Activated B cell treated with CpG ODN at 0.5 μM for 24 hours (primary cell): ENCODE measurements at regions of chr17 and their contacts with region 1.

Region 1: DNA sequence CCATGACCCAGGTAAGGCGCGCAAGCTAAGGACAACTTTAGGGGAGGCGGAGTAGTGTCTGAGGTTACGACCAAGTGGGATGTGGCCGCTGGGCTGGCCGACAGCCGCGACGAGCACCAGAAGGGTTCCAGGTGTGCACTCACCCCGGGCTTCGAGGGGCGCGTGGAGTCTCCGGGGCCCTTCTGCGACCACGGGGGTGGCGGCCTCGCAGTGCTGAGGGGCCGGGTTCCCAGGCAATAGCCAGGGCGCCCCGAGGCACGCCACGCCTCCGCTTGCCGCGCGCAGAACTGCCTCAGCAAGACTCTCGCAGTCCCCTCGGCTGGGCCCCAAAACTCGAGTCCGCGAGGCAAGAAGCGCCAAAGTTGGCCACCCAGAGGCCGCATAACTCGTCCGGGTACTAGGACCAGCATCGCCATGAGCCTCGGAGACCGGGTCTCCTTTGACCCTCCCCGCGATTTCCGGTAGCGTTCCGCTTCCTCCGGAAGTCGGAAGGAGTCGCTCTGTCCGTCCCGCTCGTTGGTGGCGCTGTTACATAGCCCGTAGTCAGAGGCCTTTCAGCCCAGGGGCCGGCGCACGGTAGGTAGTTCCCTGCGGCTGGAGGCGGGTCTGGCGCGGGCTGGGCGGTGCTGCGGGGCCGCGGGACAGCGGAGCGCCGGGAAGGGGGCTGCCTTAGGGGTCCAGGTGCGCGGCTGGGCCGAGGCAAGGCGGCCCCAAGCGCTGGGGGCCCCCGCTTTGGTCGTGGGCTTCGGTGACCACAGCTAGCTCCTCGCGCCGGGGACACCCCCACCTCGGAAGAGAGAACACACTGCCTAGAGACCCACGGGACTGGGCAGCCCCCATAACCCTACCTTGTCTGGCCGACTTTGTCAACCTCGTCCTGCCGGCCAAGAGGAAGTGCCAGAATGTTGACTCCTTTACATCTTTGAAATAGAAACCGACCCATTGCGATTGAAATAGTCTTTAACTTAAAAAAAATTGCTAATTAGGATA is at the starts of genes ADPRM and SCO1:
- DNase-seq: peak; percentile 85
- ATAC-seq: peak; percentile 97
- H3K4me3 Mint-ChIP-seq: peak within 1 kb of the TSS; percentile 92
- H3K27ac Mint-ChIP-seq: peak within 1 kb of the TSS; percentile 92
- H3K4me1 Mint-ChIP-seq: peaks cover 51% of the 10 kb centered on the region
- H3K27me3 Mint-ChIP-seq: no peaks in the 10 kb centered on the region
- CTCF ChIP-seq: no peak
- total RNA-seq, gene ADPRM: 14.1 and 14.8 TPM in 2 replicates
- total RNA-seq, gene SCO1: 27.9 and 33.3 TPM in 2 replicates

Region 2: GRCh38 chr17:10631048-10631700 is 66.2 kb before region 1 on chr17:
- CTCF ChIA-PET with region 1: no interaction called
- POLR2A ChIA-PET with region 1: interaction called, 3 read pairs
- intact Hi-C with region 1: loop called (anchors 5 kb)
- DNase-seq: no peak
- ATAC-seq: no peak
- H3K4me3 Mint-ChIP-seq: no peak overlapping the region
- H3K27ac Mint-ChIP-seq: no peak overlapping the region
- H3K4me1 Mint-ChIP-seq: peaks cover 27% of the 10 kb centered on the region
- H3K27me3 Mint-ChIP-seq: no peaks in the 10 kb centered on the region
- CTCF ChIP-seq: peak; percentile 63

Region 3: GRCh38 chr17:10729334-10730193 is 32.2 kb after region 1 on chr17 and contains the start of gene TMEM220:
- CTCF ChIA-PET with region 1: no interaction called
- POLR2A ChIA-PET with region 1: interaction called, 5 read pairs
- intact Hi-C with region 1: loop called (anchors 1 kb)
- DNase-seq: peak; percentile 54
- ATAC-seq: peak; percentile 81
- H3K4me3 Mint-ChIP-seq: peak within 1 kb of the TSS; percentile 86
- H3K27ac Mint-ChIP-seq: peak within 1 kb of the TSS; percentile 77
- H3K4me1 Mint-ChIP-seq: peaks cover 12% of the 10 kb centered on the region
- H3K27me3 Mint-ChIP-seq: peaks cover 5% of the 10 kb centered on the region
- CTCF ChIP-seq: no peak
- total RNA-seq, gene TMEM220: 1.6 and 2.4 TPM in 2 replicates

Region 4: DNA sequence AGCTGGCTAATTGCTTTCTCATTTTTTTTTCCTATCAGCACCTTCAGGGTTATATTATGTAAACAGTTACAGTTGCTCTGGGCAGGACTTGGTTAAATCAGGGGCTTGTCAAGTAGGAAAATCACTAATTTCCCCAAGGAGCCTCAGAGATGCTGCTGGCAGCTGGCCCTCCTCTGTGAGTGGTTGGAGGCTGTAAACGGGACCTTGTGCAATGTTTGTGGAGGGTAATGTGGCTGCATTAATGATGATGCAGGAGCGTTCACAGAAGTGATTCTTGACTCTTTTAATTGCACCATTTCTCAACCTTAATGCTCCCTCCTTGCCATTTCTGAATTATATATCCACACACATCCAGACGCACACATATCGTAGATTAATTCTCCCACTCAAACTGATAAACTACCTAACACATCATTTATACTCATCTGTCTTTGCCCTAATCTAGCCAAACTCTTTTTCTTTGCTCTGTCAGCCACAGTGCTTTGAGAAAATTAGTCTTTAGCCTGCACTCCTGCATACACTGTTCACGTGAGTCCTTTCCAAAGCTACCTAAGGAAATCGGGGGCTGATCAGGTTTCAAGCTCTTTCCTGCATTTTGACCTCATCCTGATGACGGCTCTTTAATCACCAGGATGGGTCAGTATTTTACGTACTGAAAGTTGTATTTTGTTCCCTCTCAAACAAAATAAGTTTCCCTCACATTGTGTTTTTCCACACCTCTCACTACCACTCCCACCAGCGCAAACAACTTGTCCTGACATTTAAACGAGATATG is 294.9 kb after region 1 on chr17:
- CTCF ChIA-PET with region 1: no interaction called
- POLR2A ChIA-PET with region 1: no interaction called
- intact Hi-C with region 1: no loop called
- DNase-seq: no peak
- ATAC-seq: no peak
- H3K4me3 Mint-ChIP-seq: no peak overlapping the region
- H3K27ac Mint-ChIP-seq: no peak overlapping the region
- H3K4me1 Mint-ChIP-seq: no peaks in the 10 kb centered on the region
- H3K27me3 Mint-ChIP-seq: peaks cover 3% of the 10 kb centered on the region
- CTCF ChIP-seq: no peak